Panc1 (cell line): ENCODE measurements at regions of chr6 and their contacts with region 1.

Region 1: DNA sequence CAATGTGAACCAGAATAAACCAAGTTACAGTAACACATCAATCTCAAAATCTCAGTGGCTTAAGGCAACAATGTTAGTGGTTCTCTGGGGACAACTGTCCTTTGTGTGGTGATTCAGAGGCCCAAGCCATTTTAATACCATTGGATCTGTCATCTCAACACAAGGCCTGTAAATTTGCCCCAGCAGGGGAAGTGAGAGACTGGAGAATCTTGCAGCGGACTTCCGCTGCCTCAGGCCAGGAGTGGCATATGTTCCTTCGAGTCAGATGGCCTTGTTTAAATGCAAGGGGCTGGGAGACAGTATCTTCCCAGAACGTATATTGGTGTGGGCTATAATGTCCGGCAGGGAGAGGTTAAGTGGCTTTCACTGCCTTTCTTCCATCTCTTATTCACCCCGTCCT is 126.0 kb downstream of the CD83 start:
- DNase-seq: no peak
- ATAC-seq: no peak
- H3K4me3 ChIP-seq: no peak overlapping the region
- H3K27ac ChIP-seq: no peak overlapping the region
- H3K4me1 ChIP-seq: no peaks in the 10 kb centered on the region
- H3K27me3 ChIP-seq: peaks cover 7% of the 10 kb centered on the region
- CTCF ChIP-seq: no peak

Region 2: DNA sequence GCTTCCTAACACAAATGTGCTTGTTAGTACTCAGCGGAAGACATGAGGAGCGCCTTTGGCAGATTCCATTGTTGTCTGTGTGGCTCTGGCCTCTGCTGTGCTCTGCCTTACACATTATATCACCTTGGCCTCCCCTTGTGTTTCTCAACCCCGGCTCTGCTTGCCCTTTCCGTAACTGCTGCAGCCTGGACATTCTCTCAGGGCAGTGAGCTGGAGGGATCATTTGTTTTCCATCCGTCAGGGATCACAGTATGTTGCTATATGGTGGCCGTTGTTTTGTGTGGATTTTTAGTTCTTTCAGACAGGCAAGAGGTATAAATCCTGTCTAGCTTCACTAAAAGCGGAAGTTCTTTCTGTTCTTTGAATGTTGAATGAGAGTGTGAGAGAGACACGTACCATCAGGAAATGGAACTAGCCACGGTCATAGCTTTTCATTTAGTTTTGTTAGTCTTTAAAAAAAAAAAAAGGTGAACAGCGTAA is 1177.4 kb after region 1 on chr6:
- CTCF ChIA-PET with region 1: interaction called, 10 read pairs
- POLR2A ChIA-PET with region 1: no interaction called
- in situ Hi-C with region 1: no loop called
- intact Hi-C with region 1: no loop called
- DNase-seq: no peak
- ATAC-seq: no peak
- H3K4me3 ChIP-seq: no peak overlapping the region
- H3K27ac ChIP-seq: no peak overlapping the region
- H3K4me1 ChIP-seq: no peaks in the 10 kb centered on the region
- H3K27me3 ChIP-seq: no peaks in the 10 kb centered on the region
- CTCF ChIP-seq: no peak